ENCODE measurements at regions of chr17 and their contacts with region 1.

Region 1: GRCh38 chr17:79612468-79613194 is 1.8 kb upstream of the RBFOX3 start:
- DNase-seq: peak; percentile 85
- H3K4me3 ChIP-seq: no peak overlapping the region
- H3K27ac ChIP-seq: peak overlapping the region in 3 of 4 donors; percentile 81 to 91 (median 91)
- H3K4me1 ChIP-seq: peaks cover 0 to 42% (median 39%) of the 10 kb centered on the region in 4 donors
- H3K27me3 ChIP-seq: peaks cover 4 to 32% (median 5%) of the 10 kb centered on the region in 3 donors
- CTCF ChIP-seq: peak; percentile 26 to 76 (median 70)
- EP300 ChIP-seq: no peak
- POLR2A ChIP-seq: no peak

Region 2: GRCh38 chr17:79406316-79406715 is 206.3 kb before region 1 on chr17:
- intact Hi-C with region 1: loop called (anchors 5 kb)
- DNase-seq: no peak
- H3K4me3 ChIP-seq: no peak overlapping the region
- H3K27ac ChIP-seq: peak overlapping the region in 1 of 4 donors; percentile 19
- H3K4me1 ChIP-seq: peaks cover 0 to 18% (median under 1%) of the 10 kb centered on the region in 4 donors
- H3K27me3 ChIP-seq: no peaks in the 10 kb centered on the region
- CTCF ChIP-seq: no peak
- EP300 ChIP-seq: no peak
- POLR2A ChIP-seq: no peak

Region 3: GRCh38 chr17:79658811-79659207 is 46.2 kb after region 1 on chr17:
- intact Hi-C with region 1: loop called (anchors 2 kb)
- DNase-seq: peak; percentile 88
- H3K4me3 ChIP-seq: peak overlapping the region in 1 of 4 donors; percentile 1
- H3K27ac ChIP-seq: peak overlapping the region in 3 of 4 donors; percentile 83 to 95 (median 89)
- H3K4me1 ChIP-seq: peaks cover 0 to 73% (median 42%) of the 10 kb centered on the region in 4 donors
- H3K27me3 ChIP-seq: no peaks in the 10 kb centered on the region
- CTCF ChIP-seq: peak in 3 of 4 experiments; percentile 36 to 55 (median 54)
- EP300 ChIP-seq: peak in 1 of 4 donors; percentile 32
- POLR2A ChIP-seq: no peak

Region 4: GRCh38 chr17:79707931-79708891 is 95.6 kb after region 1 on chr17:
- intact Hi-C with region 1: loop called (anchors 5 kb)
- DNase-seq: no peak
- H3K4me3 ChIP-seq: peak overlapping the region in 3 of 4 donors; percentile 12 to 29 (median 26)
- H3K27ac ChIP-seq: peak overlapping the region in 3 of 4 donors; percentile 68 to 83 (median 79)
- H3K4me1 ChIP-seq: peaks cover 0 to 31% (median 25%) of the 10 kb centered on the region in 4 donors
- H3K27me3 ChIP-seq: no peaks in the 10 kb centered on the region
- CTCF ChIP-seq: peak; percentile 62 to 81 (median 77)
- EP300 ChIP-seq: no peak
- POLR2A ChIP-seq: no peak